ENCODE measurements at regions of chr15 and their contacts with region 1.

Region 1: DNA sequence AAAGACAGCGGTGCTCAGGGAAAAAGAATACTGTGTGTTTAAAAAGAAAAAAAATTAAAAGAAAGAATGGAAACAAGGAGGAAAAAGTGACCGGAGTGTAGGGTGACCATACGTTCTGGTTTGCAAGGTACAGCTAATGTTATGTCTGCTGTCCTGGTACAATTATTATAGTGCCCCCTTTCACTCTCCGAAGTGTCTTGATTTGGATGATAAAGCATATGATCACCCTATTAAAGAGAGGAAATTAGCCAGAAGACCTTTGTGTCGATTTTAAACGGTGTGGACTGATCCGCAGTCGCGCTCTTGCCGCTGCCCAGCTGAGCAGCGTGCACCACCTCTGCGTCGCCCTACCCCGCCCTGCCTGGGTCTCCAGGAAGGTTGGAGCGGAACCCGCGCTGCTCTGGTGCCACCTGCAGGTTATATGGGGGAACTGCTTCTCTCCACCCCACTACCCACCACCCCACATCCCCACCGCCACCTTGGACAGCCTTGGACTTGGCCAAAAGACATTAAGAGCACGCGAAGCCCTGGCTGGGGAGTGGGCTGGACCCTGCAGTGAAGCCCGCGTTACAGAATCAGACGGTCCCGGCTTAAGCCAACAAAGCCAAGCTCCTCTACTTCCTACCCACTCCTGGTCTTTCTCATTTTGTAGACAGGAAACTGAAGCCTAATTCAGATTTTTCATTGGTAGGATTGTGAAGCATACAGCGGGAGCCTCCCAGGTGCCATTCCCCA is 41.2 kb upstream of the UBE2Q2 start:
- DNase-seq: peak; percentile 47 to 95
- H3K4me3 ChIP-seq: peak overlapping the region in 3 of 4 experiments; percentile 14 to 45 (median 26); a peak in 4 of 8 replicates
- H3K27ac ChIP-seq: no peak overlapping the region
- H3K4me1 ChIP-seq: no peaks in the 10 kb centered on the region; a peak in 1 of 7 replicates
- H3K27me3 ChIP-seq: peaks cover 0 to 9% (median 4%) of the 10 kb centered on the region in 4 experiments; a peak in 3 of 7 replicates
- CTCF ChIP-seq: peak; percentile 77 to 95 (median 94)
- EP300 ChIP-seq: no peak
- POLR2A ChIP-seq: no peak
- RAD21 ChIP-seq: peak; percentile 93 to 94

Region 2: GRCh38 chr15:75751116-75751760 is 50.8 kb before region 1 on chr15:
- CTCF ChIA-PET with region 1: interaction called, 14 read pairs
- POLR2A ChIA-PET with region 1: no interaction called
- DNase-seq: no peak
- H3K4me3 ChIP-seq: no peak overlapping the region
- H3K27ac ChIP-seq: no peak overlapping the region
- H3K4me1 ChIP-seq: 0 out of 7 replicates have a peak, but pooled peaks cover 0 to 2% (median 0%) of the 10 kb centered on the region in 4 experiments
- H3K27me3 ChIP-seq: no peaks in the 10 kb centered on the region
- CTCF ChIP-seq: no peak
- EP300 ChIP-seq: no peak
- POLR2A ChIP-seq: no peak
- RAD21 ChIP-seq: no peak

Region 3: DNA sequence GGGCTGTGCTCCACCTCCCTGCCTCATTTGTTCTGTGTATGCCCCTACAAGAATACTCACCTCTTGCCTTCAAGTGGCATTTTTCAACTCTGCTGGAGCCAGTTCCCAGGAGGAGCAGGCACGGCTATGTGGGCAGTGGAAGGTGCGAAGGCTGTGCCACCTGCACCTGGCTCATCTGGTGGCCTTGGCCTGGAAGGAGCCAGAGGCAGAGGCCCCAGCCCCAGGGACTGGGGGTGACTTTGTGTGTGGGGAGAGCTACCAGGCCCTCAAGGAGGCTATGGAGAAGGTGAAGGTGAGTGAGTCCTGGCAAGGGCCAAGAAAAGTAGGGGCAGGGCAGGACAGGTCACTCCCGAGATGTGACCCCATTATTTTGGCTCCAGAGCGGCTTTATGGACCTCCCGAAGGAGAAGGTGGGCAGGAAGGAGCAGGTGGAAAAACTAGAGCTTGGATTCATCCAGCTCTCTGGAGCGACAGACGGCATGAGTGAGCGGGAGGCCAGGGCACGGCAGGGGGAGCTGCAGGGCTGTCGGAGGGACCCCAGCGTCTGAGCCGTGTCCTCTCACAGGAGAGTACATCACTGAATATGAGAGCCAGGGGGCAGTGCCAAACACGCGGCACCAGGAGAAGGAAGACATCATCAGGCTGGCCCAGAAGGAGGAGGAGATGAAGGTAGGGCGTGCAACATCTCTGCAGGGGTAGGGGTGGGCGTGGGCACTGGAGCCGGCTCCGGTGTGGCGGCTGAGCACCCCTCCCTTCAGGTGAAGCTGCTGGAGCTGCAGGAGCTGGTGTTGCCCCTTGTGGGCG is 16.1 kb before region 1 on chr15:
- CTCF ChIA-PET with region 1: interaction called, 83 read pairs
- POLR2A ChIA-PET with region 1: no interaction called
- DNase-seq: peak; percentile 59 to 68
- H3K4me3 ChIP-seq: peak overlapping the region in 1 of 4 experiments; percentile 27; a peak in 1 of 8 replicates
- H3K27ac ChIP-seq: no peak overlapping the region
- H3K4me1 ChIP-seq: peaks cover 0 to 2% (median 0%) of the 10 kb centered on the region in 4 experiments; a peak in 1 of 7 replicates
- H3K27me3 ChIP-seq: no peaks in the 10 kb centered on the region
- CTCF ChIP-seq: peak; percentile 46 to 61 (median 50)
- EP300 ChIP-seq: no peak
- POLR2A ChIP-seq: no peak
- RAD21 ChIP-seq: peak; percentile 48 to 67

Region 4: DNA sequence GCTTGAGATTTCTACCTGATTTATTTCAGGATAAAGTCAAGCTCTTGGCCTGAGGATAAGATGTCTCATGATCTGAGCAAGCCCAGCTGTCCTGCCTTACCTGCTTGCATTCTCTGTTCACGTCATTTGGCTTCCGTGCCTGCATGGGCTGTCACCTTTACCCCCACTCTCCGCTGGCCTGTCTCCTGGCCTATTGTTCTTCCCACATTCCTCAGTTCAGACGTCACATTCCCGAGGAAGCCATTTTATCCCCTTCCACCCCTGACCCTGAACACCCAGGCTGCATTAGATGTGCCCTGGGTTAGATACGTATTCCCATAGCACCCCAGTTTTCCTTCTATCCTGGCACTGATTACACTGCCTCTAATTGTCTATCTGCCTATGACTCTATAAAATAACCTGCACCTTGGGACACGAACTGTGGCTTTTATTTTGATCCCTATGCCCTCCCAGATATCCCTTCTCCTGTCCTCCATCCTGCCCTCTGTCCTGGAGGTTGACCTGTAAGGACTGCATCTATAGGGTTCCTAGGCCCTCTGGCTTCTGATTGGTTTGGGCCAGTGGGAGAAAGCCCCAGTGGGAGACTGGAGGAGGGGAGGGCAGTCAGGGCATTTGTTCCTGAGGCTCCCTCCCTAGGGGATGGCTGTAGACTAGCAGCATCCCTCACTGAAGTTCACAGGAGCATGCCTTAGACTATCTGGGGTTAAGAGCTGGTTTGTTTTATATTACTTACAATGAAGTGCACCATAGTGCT is 22.0 kb after region 1 on chr15:
- CTCF ChIA-PET with region 1: interaction called, 29 read pairs
- POLR2A ChIA-PET with region 1: no interaction called
- DNase-seq: peak in 1 of 2 experiments; percentile 69
- H3K4me3 ChIP-seq: peak overlapping the region in 1 of 4 experiments; percentile 24; a peak in 1 of 8 replicates
- H3K27ac ChIP-seq: peak overlapping the region; percentile 76
- H3K4me1 ChIP-seq: peaks cover 5 to 14% (median 7%) of the 10 kb centered on the region in 4 experiments
- H3K27me3 ChIP-seq: no peaks in the 10 kb centered on the region
- CTCF ChIP-seq: no peak
- EP300 ChIP-seq: peak in 1 of 2 experiments; percentile 55; a peak in 1 of 3 replicates
- POLR2A ChIP-seq: peak; percentile 18 to 49; a peak in 2 of 3 replicates
- RAD21 ChIP-seq: no peak; a peak in 1 of 4 replicates

Region 5: GRCh38 chr15:75869446-75869845 is 67.4 kb after region 1 on chr15:
- CTCF ChIA-PET with region 1: no interaction called
- POLR2A ChIA-PET with region 1: no interaction called
- DNase-seq: no peak
- H3K4me3 ChIP-seq: no peak overlapping the region
- H3K27ac ChIP-seq: no peak overlapping the region
- H3K4me1 ChIP-seq: peaks cover 0 to 12% (median 7%) of the 10 kb centered on the region in 4 experiments; a peak in 3 of 7 replicates
- H3K27me3 ChIP-seq: no peaks in the 10 kb centered on the region
- CTCF ChIP-seq: no peak
- EP300 ChIP-seq: no peak
- POLR2A ChIP-seq: no peak
- RAD21 ChIP-seq: no peak

Measured in H1 (cell line).